ENCODE measurements at regions of chr9 and their contacts with region 1.

Region 1: GRCh38 chr9:116737152-116737546 is 50.0 kb downstream of the TRIM32 start:
- DNase-seq: peak; percentile 46
- H3K4me3 ChIP-seq: no peak overlapping the region
- H3K27ac ChIP-seq: no peak overlapping the region
- H3K4me1 ChIP-seq: no peaks in the 10 kb centered on the region
- H3K27me3 ChIP-seq: no peaks in the 10 kb centered on the region
- CTCF ChIP-seq: peak; percentile 87 to 96
- POLR2A ChIP-seq: no peak

Region 2: DNA sequence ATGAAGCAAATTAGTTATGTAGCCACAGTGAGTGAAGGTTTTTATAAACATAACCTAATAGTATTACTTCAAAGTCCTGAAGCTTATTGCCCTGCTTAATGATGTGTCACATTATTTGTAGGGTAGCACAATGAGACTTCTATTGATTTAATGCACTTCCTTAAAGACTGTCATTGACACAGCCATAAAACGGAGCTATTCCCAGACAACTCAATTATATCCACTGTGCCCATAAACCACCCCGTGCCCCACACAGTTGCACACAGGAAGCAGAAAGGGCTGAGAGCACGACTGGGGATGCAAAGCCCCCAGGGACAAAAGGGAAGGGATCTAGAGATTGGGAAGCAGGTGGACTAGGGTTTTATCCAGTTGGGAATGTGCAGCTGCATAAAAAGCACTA is 13.0 kb before region 1 on chr9:
- CTCF ChIA-PET with region 1: interaction called, 30 read pairs
- POLR2A ChIA-PET with region 1: no interaction called
- dilution Hi-C with region 1: no loop called
- intact Hi-C with region 1: no loop called
- DNase-seq: no peak
- H3K4me3 ChIP-seq: no peak overlapping the region
- H3K27ac ChIP-seq: no peak overlapping the region
- H3K4me1 ChIP-seq: no peaks in the 10 kb centered on the region
- H3K27me3 ChIP-seq: no peaks in the 10 kb centered on the region
- CTCF ChIP-seq: no peak
- POLR2A ChIP-seq: no peak

Region 3: DNA sequence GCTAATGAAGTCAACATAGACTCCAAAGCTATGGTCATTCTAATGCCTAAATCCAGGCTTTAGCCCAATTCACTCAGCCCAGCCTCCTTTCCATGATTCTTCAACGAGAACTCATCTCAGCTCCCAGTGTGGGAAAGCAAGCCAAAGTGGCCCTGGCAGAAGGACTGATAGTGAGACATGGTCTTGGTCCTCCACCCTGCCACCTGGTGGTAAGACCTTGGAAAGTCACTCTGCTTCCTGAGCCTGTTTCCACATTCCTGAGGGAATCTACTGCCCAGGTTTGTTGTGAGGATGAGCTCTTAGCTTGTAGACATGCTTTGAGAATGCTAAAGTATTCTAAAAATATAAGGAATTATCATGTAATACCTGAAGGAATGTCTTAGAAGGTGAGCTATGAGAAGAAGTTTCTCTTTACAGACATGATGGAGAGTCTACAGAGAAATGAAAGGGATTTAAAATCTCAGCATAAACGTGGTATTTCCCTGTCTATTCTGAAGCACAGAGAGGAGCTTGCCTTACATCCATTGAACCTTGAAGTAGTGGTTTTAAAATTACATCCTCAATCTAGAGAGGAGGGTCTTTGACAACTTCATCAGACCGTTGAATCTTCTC is 123.5 kb after region 1 on chr9:
- CTCF ChIA-PET with region 1: interaction called, 18 read pairs
- POLR2A ChIA-PET with region 1: no interaction called
- dilution Hi-C with region 1: no loop called
- intact Hi-C with region 1: no loop called
- DNase-seq: peak; percentile 11
- H3K4me3 ChIP-seq: no peak overlapping the region
- H3K27ac ChIP-seq: no peak overlapping the region
- H3K4me1 ChIP-seq: no peaks in the 10 kb centered on the region
- H3K27me3 ChIP-seq: no peaks in the 10 kb centered on the region
- CTCF ChIP-seq: peak; percentile 45 to 54
- POLR2A ChIP-seq: no peak

Region 4: DNA sequence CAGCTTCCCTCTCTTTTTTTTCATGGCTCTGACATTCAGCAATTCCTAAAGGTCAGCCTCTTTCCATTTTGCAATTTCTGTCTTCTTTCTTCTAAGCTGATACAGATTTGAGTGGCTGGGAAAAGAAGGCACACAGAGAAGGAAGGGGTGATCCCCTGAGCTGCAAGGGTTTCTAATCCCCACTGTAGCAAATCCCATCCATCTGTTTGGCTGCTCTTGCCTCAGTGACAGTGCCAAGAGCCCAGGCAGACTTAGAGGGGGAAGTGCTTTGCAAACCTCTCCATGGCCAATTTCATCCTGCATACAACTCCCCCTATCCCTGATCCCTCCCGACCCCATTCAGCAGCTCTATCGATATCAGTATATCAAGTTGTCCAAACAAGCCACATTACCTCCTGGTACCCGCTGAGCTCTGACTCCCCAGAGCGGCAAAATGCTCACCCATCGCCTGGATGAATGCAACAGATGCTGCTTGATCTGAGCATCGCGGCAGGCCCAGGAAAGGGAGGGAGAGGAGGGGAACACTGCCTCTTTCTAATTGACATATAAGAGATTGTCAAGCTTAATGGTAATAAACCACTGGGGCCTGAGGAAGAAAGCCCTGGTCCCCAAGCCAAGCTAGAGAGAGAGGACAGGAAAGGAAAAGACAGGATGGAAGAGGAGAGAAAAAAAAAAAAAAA is 408.8 kb after region 1 on chr9:
- CTCF ChIA-PET with region 1: no interaction called
- POLR2A ChIA-PET with region 1: no interaction called
- dilution Hi-C with region 1: no loop called
- intact Hi-C with region 1: no loop called
- DNase-seq: no peak
- H3K4me3 ChIP-seq: no peak overlapping the region
- H3K27ac ChIP-seq: no peak overlapping the region
- H3K4me1 ChIP-seq: no peaks in the 10 kb centered on the region
- H3K27me3 ChIP-seq: no peaks in the 10 kb centered on the region
- CTCF ChIP-seq: no peak
- POLR2A ChIP-seq: no peak

Region 5: DNA sequence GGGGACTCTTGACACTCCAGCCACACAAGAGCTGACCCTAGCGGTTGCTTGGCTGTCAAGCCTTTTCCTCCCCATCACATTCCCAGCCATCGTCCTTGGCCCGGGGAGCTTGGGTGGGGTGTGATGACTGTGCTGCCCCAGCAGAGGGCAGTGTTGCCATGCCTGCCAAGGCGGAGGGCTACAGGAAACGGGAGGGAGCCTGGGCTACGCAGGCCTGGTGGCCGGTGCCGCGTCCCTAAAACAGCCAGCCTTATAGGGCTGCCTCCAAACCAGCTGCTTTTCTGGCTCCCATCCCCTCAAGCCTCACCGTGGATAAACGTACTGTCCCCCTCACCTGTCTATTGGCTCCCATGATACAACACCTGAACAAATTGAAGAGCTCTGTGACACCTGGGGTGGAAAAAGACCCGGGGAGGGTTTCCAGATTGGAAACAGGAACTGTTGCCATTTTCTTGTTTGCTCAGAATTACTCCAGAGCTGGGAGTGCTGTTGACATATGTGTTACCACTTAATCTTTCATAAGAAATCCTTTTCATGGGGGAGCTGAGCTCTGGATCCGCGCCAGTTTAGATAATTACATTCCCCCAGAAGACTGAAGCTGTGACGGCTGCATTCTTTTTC is 750.5 kb after region 1 on chr9:
- CTCF ChIA-PET with region 1: interaction called, 6 read pairs
- POLR2A ChIA-PET with region 1: no interaction called
- dilution Hi-C with region 1: no loop called
- intact Hi-C with region 1: loop called (anchors 1 kb)
- DNase-seq: peak; percentile 64
- H3K4me3 ChIP-seq: no peak overlapping the region
- H3K27ac ChIP-seq: no peak overlapping the region
- H3K4me1 ChIP-seq: no peaks in the 10 kb centered on the region
- H3K27me3 ChIP-seq: no peaks in the 10 kb centered on the region
- CTCF ChIP-seq: peak; percentile 88 to 95
- POLR2A ChIP-seq: no peak

Region 6: GRCh38 chr9:117555964-117556629 is 818.9 kb after region 1 on chr9:
- CTCF ChIA-PET with region 1: interaction called, 5 read pairs
- POLR2A ChIA-PET with region 1: no interaction called
- dilution Hi-C with region 1: no loop called
- intact Hi-C with region 1: loop called (anchors 1 kb)
- DNase-seq: peak; percentile 44
- H3K4me3 ChIP-seq: no peak overlapping the region
- H3K27ac ChIP-seq: no peak overlapping the region
- H3K4me1 ChIP-seq: no peaks in the 10 kb centered on the region
- H3K27me3 ChIP-seq: no peaks in the 10 kb centered on the region
- CTCF ChIP-seq: peak; percentile 65 to 74
- POLR2A ChIP-seq: no peak

Region 7: GRCh38 chr9:118271936-118272335 is 1534.8 kb after region 1 on chr9:
- CTCF ChIA-PET with region 1: no interaction called
- POLR2A ChIA-PET with region 1: no interaction called
- dilution Hi-C with region 1: no loop called
- intact Hi-C with region 1: no loop called
- DNase-seq: no peak
- H3K4me3 ChIP-seq: no peak overlapping the region
- H3K27ac ChIP-seq: no peak overlapping the region
- H3K4me1 ChIP-seq: no peaks in the 10 kb centered on the region
- H3K27me3 ChIP-seq: no peaks in the 10 kb centered on the region
- CTCF ChIP-seq: no peak
- POLR2A ChIP-seq: no peak

Measured in endothelial cell of umbilical vein (primary cell).